Activated naive CD8-positive, alpha-beta T cell treated with anti-CD3 and anti-CD28 coated beads, Interleukin-2, amount 10 ng/mL, durations not matched to agents 7 days and 5 days (primary cell): ENCODE measurements at regions of chr20 and their contacts with region 1.

Region 1: GRCh38 chr20:50790651-50791277 is 4.1 kb upstream of the BCAS4 start:
- DNase-seq: peak; percentile 87
- ATAC-seq: peak; percentile 67
- H3K4me3 Mint-ChIP-seq: peak overlapping the region; percentile 50
- H3K27ac Mint-ChIP-seq: peak overlapping the region; percentile 77
- H3K4me1 Mint-ChIP-seq: peaks cover 13% of the 10 kb centered on the region
- H3K27me3 Mint-ChIP-seq: peaks cover 9% of the 10 kb centered on the region

Region 2: DNA sequence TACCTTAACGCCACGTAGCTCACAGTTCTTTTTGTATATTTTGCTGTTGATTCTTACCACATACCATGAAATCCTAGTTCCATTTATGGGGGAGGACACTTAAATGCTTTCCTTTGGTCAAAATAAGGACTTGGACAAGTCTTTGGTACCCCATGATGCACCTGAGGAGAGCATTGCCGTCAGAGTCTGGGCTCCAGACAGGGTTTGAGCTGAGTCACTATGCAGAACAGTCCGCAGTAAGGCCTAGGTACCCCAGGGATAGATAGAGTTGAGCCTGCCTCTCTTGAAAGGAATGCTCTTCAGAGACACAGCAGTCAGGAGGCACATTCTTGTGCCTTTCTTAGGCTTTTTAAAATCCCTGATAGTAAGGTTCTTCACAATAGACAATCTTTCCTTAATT is 53.4 kb before region 1 on chr20:
- POLR2A ChIA-PET with region 1: no interaction called
- DNase-seq: no peak
- ATAC-seq: no peak
- H3K4me3 Mint-ChIP-seq: no peak overlapping the region
- H3K27ac Mint-ChIP-seq: no peak overlapping the region
- H3K4me1 Mint-ChIP-seq: peaks cover 29% of the 10 kb centered on the region
- H3K27me3 Mint-ChIP-seq: no peaks in the 10 kb centered on the region

Region 3: DNA sequence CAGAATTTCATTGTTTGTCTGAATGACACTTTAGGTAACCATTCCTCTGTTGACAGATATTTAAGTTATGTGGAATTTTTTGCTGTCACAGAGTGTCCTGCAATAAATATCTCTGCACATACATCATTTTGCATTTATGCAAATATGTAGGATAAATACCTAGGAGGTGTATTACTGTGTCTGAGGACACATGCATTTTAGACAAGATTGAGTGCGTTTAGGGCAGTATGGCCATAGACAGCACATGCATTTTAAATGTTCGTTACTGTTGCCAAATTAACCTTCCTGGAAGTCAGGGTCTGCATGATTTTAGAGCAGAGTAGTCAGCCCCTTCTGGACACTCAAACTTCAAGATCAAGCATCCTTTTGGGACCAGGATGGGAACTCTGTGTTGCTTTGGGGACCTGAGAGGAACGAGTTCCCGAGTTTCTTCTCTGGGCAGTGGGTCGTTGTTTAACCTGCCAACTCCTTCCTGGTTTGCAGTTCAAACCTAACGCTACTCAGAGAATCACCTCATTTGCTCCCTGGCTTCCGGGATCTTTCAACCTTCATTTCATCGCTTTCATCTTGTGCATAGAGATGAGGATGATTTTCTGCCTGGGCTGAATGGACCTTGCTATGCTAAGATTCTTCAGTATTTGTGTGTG is 13.8 kb after region 1 on chr20:
- POLR2A ChIA-PET with region 1: interaction called, 10 read pairs
- DNase-seq: no peak
- ATAC-seq: peak; percentile 95
- H3K4me3 Mint-ChIP-seq: peak overlapping the region; percentile 73
- H3K27ac Mint-ChIP-seq: peak overlapping the region; percentile 96
- H3K4me1 Mint-ChIP-seq: peaks cover 38% of the 10 kb centered on the region
- H3K27me3 Mint-ChIP-seq: no peaks in the 10 kb centered on the region

Region 4: DNA sequence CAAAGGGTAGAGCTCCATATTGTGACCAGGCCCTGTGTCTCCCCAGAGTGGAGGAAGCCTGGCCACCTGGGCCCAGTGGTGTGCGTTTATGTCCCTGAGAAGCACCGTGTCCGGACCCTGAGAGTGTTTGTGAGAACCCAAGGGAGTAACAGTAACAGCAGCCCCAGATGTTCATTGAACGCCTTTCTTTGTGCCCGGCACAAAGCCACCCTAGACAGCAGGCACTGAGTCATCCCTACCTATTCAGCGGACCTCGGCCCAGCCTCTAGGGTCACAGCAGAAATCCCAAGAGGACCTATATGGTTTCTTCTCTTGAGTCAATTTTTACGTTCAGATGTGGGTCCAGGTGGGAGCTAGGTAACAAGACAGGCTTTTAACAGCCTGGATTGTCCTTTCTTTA is 28.6 kb after region 1 on chr20:
- POLR2A ChIA-PET with region 1: interaction called, 29 read pairs
- DNase-seq: no peak
- ATAC-seq: no peak
- H3K4me3 Mint-ChIP-seq: no peak overlapping the region
- H3K27ac Mint-ChIP-seq: peak overlapping the region; percentile 99
- H3K4me1 Mint-ChIP-seq: peaks cover 60% of the 10 kb centered on the region
- H3K27me3 Mint-ChIP-seq: no peaks in the 10 kb centered on the region

Region 5: GRCh38 chr20:50844430-50845100 is 53.8 kb after region 1 on chr20:
- POLR2A ChIA-PET with region 1: interaction called, 12 read pairs
- DNase-seq: peak; percentile 71
- ATAC-seq: peak; percentile 100
- H3K4me3 Mint-ChIP-seq: peak overlapping the region; percentile 58
- H3K27ac Mint-ChIP-seq: peak overlapping the region; percentile 94
- H3K4me1 Mint-ChIP-seq: peaks cover 24% of the 10 kb centered on the region
- H3K27me3 Mint-ChIP-seq: no peaks in the 10 kb centered on the region

Region 6: DNA sequence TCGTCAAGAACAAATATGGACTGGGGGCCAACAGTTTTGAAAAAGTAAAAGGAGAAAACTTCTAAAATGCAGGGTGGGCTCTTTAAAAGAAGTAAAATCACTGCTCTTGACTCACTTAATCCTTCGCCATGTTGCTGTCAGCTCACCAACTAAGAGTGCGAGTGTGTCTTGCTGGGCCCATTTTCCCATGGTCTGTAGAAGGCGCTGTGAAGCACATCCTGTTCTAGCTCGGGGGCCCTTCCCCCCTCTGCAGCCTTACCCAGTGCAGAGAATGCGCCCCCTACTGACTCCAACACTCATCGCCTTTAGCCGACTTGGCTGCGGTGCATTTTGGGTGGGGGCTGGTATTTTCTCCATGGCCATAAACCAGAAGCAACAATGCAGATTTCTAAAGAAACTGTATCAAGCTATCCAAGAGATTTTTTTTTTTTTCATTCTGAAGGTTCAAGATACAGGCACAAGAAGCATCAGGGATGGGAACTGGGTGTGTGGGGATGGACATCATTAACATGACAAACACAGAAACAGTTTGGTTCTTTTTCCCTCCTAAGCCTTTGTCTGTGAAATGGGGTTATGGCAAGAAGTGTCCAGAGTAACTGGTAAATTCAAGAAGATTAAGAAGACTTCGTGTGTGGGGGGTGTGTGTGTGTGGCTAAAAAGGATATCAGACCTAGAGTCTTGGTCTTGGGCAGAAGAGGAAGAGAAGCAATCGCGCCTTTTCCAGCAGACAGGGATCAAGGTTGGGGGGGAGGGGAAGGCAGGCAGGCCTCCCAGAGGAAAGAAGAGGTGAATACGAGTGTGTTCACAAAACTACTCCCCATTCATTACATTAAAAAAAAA is 138.8 kb after region 1 on chr20:
- POLR2A ChIA-PET with region 1: interaction called, 130 read pairs
- DNase-seq: peak; percentile 86
- ATAC-seq: peak; percentile 68
- H3K4me3 Mint-ChIP-seq: peak overlapping the region; percentile 95
- H3K27ac Mint-ChIP-seq: peak overlapping the region; percentile 97
- H3K4me1 Mint-ChIP-seq: peaks cover 49% of the 10 kb centered on the region
- H3K27me3 Mint-ChIP-seq: no peaks in the 10 kb centered on the region

Region 7: GRCh38 chr20:50958615-50959542 is 168.1 kb after region 1 on chr20 and contains the start of gene MOCS3:
- POLR2A ChIA-PET with region 1: interaction called, 41 read pairs
- DNase-seq: peak; percentile 74
- ATAC-seq: peak; percentile 67
- H3K4me3 Mint-ChIP-seq: peak within 1 kb of the TSS; percentile 94
- H3K27ac Mint-ChIP-seq: peak within 1 kb of the TSS; percentile 93
- H3K4me1 Mint-ChIP-seq: peaks cover 38% of the 10 kb centered on the region
- H3K27me3 Mint-ChIP-seq: no peaks in the 10 kb centered on the region
- total RNA-seq, gene MOCS3: 5.3 to 5.8 TPM